ENCODE measurements at regions of chr6 and their contacts with region 1.

Region 1: GRCh38 chr6:2634139-2634964 is 116.4 kb downstream of the MYLK4 start:
- DNase-seq: peak; percentile 31
- H3K4me3 ChIP-seq: peak overlapping the region; percentile 40
- H3K27me3 ChIP-seq: no peaks in the 10 kb centered on the region; the same call in 1 of the 2 replicates
- CTCF ChIP-seq: peak; percentile 99

Region 2: GRCh38 chr6:1554476-1555310 is 1079.7 kb before region 1 on chr6:
- CTCF ChIA-PET with region 1: no interaction called
- POLR2A ChIA-PET with region 1: no interaction called
- DNase-seq: no peak
- H3K4me3 ChIP-seq: peak overlapping the region; percentile 62
- H3K27me3 ChIP-seq: no peaks in the 10 kb centered on the region
- CTCF ChIP-seq: peak; percentile 61

Region 3: GRCh38 chr6:1601158-1602048 is 1032.9 kb before region 1 on chr6:
- CTCF ChIA-PET with region 1: interaction called, 71 read pairs
- POLR2A ChIA-PET with region 1: no interaction called
- DNase-seq: no peak
- H3K4me3 ChIP-seq: no peak overlapping the region
- H3K27me3 ChIP-seq: peaks cover 15% of the 10 kb centered on the region
- CTCF ChIP-seq: no peak

Region 4: GRCh38 chr6:2565499-2565898 is 68.9 kb before region 1 on chr6:
- CTCF ChIA-PET with region 1: no interaction called
- POLR2A ChIA-PET with region 1: no interaction called
- DNase-seq: no peak
- H3K4me3 ChIP-seq: no peak overlapping the region
- H3K27me3 ChIP-seq: peaks cover 2% of the 10 kb centered on the region; the same call in 1 of the 2 replicates
- CTCF ChIP-seq: no peak

Region 5: DNA sequence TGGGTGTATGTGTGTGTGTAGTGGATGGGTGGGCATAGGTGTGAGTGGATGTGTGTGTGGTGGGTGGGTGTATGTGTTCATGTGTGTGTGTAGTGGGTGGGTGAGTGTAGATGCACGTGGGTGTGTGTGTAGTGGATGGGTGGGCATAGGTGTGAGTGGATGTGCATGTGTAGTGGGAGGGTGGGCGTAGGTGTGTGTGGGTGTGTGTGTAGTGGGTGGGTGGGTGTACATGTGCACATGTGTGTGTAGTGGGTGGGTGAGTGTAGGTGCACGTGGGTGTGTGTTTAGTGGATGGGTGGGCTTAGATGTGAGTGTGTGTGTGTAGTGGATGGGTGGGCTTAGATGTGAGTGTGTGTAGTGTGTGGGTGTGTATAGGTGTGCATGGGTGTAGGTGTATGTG is 12.0 kb after region 1 on chr6:
- CTCF ChIA-PET with region 1: interaction called, 29 read pairs
- POLR2A ChIA-PET with region 1: no interaction called
- DNase-seq: no peak
- H3K4me3 ChIP-seq: no peak overlapping the region
- H3K27me3 ChIP-seq: peaks cover 3% of the 10 kb centered on the region; the same call in 1 of the 2 replicates
- CTCF ChIP-seq: no peak

Measured in BJ (cell line).